ENCODE measurements at regions of chr2 and their contacts with region 1.

Region 1: GRCh38 chr2:72694715-72695496 is 130.9 kb downstream of the EXOC6B start:
- DNase-seq: peak in 1 of 2 experiments; percentile 29
- H3K4me3 ChIP-seq: no peak overlapping the region
- H3K27ac ChIP-seq: no peak overlapping the region
- H3K4me1 ChIP-seq: peaks cover 16% of the 10 kb centered on the region
- H3K27me3 ChIP-seq: no peaks in the 10 kb centered on the region
- CTCF ChIP-seq: no peak

Region 2: DNA sequence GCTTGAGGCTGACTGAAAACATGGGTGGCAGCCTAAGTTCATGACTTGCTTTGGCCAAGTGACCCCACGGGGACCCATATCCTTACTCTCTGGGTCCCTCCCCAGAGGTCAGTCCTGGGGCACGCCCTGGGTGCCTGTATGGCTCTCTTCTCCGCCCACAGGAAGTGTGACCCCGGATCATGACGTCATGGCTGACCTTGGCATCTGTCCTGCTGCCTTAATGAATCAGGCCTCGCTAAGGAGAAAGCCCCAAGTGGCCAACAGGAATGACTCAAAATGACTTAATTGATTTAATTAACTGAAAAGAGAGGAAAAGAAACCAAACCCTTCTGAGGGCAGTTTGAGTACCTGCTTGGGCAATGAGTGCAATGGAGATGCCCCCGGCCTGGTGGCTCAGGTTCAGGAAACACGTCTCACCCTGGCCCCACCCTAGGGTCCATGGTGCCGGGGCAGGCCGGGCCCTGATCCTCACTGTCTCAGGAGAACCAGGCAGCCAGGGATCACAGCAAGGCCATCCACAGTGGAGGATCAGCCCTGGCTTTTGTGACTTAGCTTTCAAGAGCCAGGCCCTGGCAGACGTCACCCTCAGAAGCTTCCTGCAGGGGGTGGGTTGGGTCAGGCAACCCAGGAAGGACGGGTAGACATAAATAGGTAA is 659.3 kb before region 1 on chr2:
- CTCF ChIA-PET with region 1: no interaction called
- POLR2A ChIA-PET with region 1: interaction called, 11 read pairs
- intact Hi-C with region 1: no loop called
- DNase-seq: no peak
- H3K4me3 ChIP-seq: no peak overlapping the region
- H3K27ac ChIP-seq: no peak overlapping the region
- H3K4me1 ChIP-seq: peaks cover 14% of the 10 kb centered on the region
- H3K27me3 ChIP-seq: no peaks in the 10 kb centered on the region
- CTCF ChIP-seq: no peak

Region 3: DNA sequence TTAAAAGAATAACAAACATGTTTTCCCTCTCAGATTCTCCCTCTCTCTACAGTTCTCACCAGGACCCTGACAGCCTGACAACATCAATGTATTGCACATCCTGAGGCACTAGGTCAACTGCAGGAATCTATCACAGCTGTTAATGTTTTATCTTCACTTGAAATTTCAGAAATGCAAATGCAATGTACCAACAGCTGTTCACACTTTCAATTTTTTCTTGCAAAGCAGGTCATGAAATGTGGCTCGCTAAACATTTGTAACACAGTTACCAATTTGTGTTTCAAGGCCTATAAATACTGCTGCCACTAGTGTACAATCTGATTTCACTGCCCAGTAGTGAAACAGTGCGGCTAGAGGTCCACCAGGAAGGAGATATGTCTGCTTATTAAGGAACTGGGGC is 16.9 kb before region 1 on chr2:
- CTCF ChIA-PET with region 1: no interaction called
- POLR2A ChIA-PET with region 1: no interaction called
- intact Hi-C with region 1: no loop called
- DNase-seq: no peak
- H3K4me3 ChIP-seq: no peak overlapping the region
- H3K27ac ChIP-seq: no peak overlapping the region
- H3K4me1 ChIP-seq: no peaks in the 10 kb centered on the region
- H3K27me3 ChIP-seq: no peaks in the 10 kb centered on the region
- CTCF ChIP-seq: no peak

Measured in PC-9 (cell line).